Left cardiac atrium (tissue), 4 donors: ENCODE measurements at regions of chr4 and their contacts with region 1.

Region 1: GRCh38 chr4:37793562-37793961 is 32.9 kb upstream of the PGM2 start:
- DNase-seq: no peak
- ATAC-seq: peak; percentile 78 to 81

Region 2: DNA sequence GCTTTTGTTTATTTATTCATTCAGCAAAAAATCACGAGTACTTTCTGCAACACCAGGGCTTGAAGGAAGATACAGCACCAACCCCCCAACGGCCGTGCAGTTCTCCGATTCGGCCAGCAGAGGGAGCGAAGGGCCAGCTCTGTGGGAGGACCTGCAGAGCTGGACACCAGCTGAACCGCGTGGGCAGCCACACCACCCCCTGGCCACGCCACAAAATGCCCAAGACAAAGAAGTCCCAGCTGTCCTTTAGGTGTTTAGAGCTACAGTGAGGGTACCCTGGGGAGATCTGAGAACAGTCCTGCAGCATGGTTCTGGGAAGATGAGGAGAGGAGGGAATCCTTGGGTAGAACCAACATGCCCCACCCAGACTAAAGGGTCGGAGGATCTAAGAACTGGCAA is 190.5 kb before region 1 on chr4:
- intact Hi-C with region 1: loop called (anchors 1 to 5 kb)
- DNase-seq: peak; percentile 81
- ATAC-seq: peak; percentile 93 to 94

Region 3: DNA sequence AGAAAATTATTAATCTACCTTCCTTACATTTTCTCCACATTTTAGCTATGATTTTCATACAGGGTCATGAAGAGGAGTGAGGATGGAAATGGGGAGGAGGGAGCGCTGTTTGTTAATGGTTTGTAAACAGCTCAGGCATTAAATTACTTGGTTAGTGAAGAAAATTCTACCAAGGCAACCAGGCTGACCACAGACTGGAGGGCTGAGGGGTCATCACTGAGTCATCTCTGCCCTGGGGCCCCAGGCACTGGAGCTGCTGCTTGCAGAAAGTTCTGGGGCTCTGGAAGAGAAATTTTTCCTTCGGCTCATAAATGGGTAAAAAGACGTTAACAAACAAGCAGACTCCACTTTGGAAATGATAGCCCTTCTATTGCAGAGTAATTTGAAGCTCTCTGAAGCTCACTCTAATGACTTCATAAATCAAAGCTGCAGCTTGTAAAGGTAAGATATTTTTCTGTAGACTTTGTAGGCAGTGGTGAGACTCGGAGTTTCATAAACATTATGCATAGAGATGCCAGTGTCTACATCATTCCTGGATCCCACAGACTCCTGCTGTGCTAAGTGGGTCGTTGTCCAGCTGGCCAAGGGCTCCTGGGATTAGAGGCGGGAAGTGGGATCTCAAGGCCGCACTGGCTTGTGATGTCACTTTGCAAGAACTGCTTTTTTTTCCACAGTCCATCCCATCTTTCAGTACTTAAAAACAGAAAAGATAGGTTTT is 326.3 kb after region 1 on chr4:
- intact Hi-C with region 1: no loop called
- DNase-seq: peak; percentile 37
- ATAC-seq: peak; percentile 27 to 61